Right ventricle myocardium superior (tissue), 1 donor: ENCODE measurements at regions of chr1 and their contacts with region 1.

Region 1: GRCh38 chr1:66331657-66332547 is 202.1 kb upstream of the SGIP1 start:
- DNase-seq: peak; percentile 80
- ATAC-seq: peak; percentile 65

Region 2: DNA sequence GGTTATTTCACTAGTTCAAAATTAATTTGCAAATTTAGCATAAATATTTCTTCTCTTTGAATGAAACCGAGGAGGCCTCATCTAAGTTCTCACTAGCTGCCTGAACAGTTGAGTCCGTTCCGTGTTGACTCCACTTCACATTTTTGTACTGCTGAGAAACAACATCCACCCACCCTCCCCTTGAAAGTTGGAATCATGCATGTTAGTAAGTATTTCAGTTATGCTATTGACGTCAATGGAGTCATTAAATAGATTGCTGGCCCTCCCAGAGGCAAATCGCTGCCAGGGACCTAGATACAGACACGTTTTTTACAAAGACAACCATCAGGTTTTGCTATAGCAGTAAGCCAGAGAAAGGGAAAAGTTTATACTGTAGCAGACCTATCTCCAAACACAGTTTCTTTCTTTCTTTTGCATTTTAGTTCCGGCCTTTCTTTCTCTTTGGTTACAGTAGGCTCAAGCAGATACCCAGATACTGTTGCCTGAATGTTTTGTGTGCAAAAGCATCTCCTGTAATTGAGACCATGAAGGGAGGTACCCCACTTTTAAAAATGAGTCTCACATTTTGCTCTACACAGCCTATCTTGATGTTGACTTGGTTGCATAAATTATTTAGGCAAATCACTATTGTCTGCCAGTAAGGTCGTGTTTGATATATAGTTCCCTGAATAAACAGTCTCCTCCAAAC is 60.5 kb before region 1 on chr1:
- intact Hi-C with region 1: loop called (anchors 5 kb)
- DNase-seq: peak; percentile 89
- ATAC-seq: peak; percentile 92